Caco-2 (cell line): ENCODE measurements at regions of chr2 and their contacts with region 1.

Region 1: GRCh38 chr2:219057709-219058540 is 2.8 kb downstream of the IHH start:
- DNase-seq: peak; percentile 82 to 89
- H3K4me3 ChIP-seq: peak overlapping the region; percentile 99
- H3K4me3 Mint-ChIP-seq: peak overlapping the region; percentile 92
- H3K27ac Mint-ChIP-seq: no peak overlapping the region
- H3K4me1 ChIP-seq: peaks cover 11% of the 10 kb centered on the region
- H3K4me1 Mint-ChIP-seq: peaks cover 7% of the 10 kb centered on the region
- H3K27me3 ChIP-seq: no peaks in the 10 kb centered on the region
- H3K27me3 Mint-ChIP-seq: peaks cover 3% of the 10 kb centered on the region
- CTCF ChIP-seq: peak; percentile 91 to 95

Region 2: GRCh38 chr2:219002395-219003266 is 55.3 kb before region 1 on chr2:
- CTCF ChIA-PET with region 1: interaction called, 9 read pairs
- POLR2A ChIA-PET with region 1: interaction called, 7 read pairs
- intact Hi-C with region 1: loop called (anchors 5 kb)
- DNase-seq: peak in 1 of 2 experiments; percentile 85
- H3K4me3 ChIP-seq: peak overlapping the region; percentile 67
- H3K4me3 Mint-ChIP-seq: peak overlapping the region; percentile 79
- H3K27ac Mint-ChIP-seq: no peak overlapping the region
- H3K4me1 ChIP-seq: peaks cover 25% of the 10 kb centered on the region
- H3K4me1 Mint-ChIP-seq: peaks cover 15% of the 10 kb centered on the region
- H3K27me3 ChIP-seq: no peaks in the 10 kb centered on the region
- H3K27me3 Mint-ChIP-seq: peaks cover 7% of the 10 kb centered on the region
- CTCF ChIP-seq: peak; percentile 48 to 77

Region 3: GRCh38 chr2:219104107-219105035 is 46.4 kb after region 1 on chr2:
- CTCF ChIA-PET with region 1: interaction called, 53 read pairs
- POLR2A ChIA-PET with region 1: interaction called, 3 read pairs
- intact Hi-C with region 1: loop called (anchors 1 kb)
- DNase-seq: peak; percentile 60
- H3K4me3 ChIP-seq: no peak overlapping the region
- H3K4me3 Mint-ChIP-seq: no peak overlapping the region
- H3K27ac Mint-ChIP-seq: no peak overlapping the region
- H3K4me1 ChIP-seq: peaks cover 10% of the 10 kb centered on the region
- H3K4me1 Mint-ChIP-seq: peaks cover 4% of the 10 kb centered on the region
- H3K27me3 ChIP-seq: no peaks in the 10 kb centered on the region
- H3K27me3 Mint-ChIP-seq: no peaks in the 10 kb centered on the region
- CTCF ChIP-seq: peak; percentile 80 to 86

Region 4: GRCh38 chr2:219111375-219112061 is 53.6 kb after region 1 on chr2:
- CTCF ChIA-PET with region 1: interaction called, 85 read pairs
- POLR2A ChIA-PET with region 1: interaction called, 4 read pairs
- intact Hi-C with region 1: no loop called
- DNase-seq: peak; percentile 63 to 81
- H3K4me3 ChIP-seq: no peak overlapping the region
- H3K4me3 Mint-ChIP-seq: peak overlapping the region; percentile 46
- H3K27ac Mint-ChIP-seq: peak overlapping the region; percentile 54
- H3K4me1 ChIP-seq: peaks cover 51% of the 10 kb centered on the region
- H3K4me1 Mint-ChIP-seq: peaks cover 41% of the 10 kb centered on the region
- H3K27me3 ChIP-seq: no peaks in the 10 kb centered on the region
- H3K27me3 Mint-ChIP-seq: no peaks in the 10 kb centered on the region
- CTCF ChIP-seq: no peak

Region 5: GRCh38 chr2:219119422-219120043 is 61.6 kb after region 1 on chr2:
- CTCF ChIA-PET with region 1: interaction called, 85 read pairs
- POLR2A ChIA-PET with region 1: no interaction called
- intact Hi-C with region 1: loop called (anchors 1 kb)
- DNase-seq: peak; percentile 77 to 80
- H3K4me3 ChIP-seq: no peak overlapping the region
- H3K4me3 Mint-ChIP-seq: no peak overlapping the region
- H3K27ac Mint-ChIP-seq: no peak overlapping the region
- H3K4me1 ChIP-seq: peaks cover 36% of the 10 kb centered on the region
- H3K4me1 Mint-ChIP-seq: peaks cover 44% of the 10 kb centered on the region
- H3K27me3 ChIP-seq: no peaks in the 10 kb centered on the region
- H3K27me3 Mint-ChIP-seq: no peaks in the 10 kb centered on the region
- CTCF ChIP-seq: peak; percentile 84 to 89

Region 6: DNA sequence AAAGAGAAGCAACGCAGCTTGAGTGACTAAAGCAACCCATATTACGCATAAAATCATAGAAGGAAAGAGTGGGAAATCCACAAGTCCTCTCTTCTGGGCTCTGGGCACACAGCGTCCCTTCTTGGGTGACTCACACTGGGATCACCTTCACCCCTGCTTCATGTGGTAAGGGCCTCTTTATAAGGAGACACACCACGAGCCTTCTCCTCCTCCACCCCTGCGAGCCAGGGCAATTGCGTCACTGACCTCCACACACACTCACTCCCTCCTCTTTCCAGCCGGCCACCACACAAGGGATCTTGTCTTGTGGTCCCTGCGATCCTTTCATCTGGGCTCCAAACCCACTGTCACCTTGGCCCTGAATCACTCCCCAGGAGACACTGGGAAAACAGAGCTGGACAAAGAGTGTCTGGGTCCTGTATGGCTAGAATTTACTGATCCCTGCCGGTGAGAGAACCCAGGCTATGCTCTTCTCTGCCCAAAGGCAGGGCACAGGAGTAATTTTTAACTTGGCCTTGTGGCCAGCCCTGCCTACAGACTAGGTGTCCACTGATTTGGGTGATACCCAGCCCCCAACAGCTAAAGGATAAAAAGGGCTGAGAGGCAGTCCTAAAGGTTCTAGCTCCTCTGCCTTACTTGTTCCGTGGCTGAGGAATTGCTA is 67.4 kb after region 1 on chr2:
- CTCF ChIA-PET with region 1: interaction called, 85 read pairs
- POLR2A ChIA-PET with region 1: interaction called, 3 read pairs
- intact Hi-C with region 1: loop called (anchors 2 kb)
- DNase-seq: peak; percentile 57 to 85
- H3K4me3 ChIP-seq: no peak overlapping the region
- H3K4me3 Mint-ChIP-seq: peak overlapping the region; percentile 53
- H3K27ac Mint-ChIP-seq: peak overlapping the region; percentile 25
- H3K4me1 ChIP-seq: peaks cover 73% of the 10 kb centered on the region
- H3K4me1 Mint-ChIP-seq: peaks cover 50% of the 10 kb centered on the region
- H3K27me3 ChIP-seq: no peaks in the 10 kb centered on the region
- H3K27me3 Mint-ChIP-seq: no peaks in the 10 kb centered on the region
- CTCF ChIP-seq: no peak